Cardiac septum (tissue), 1 donor: ENCODE measurements at regions of chr5 and their contacts with region 1.

Region 1: GRCh38 chr5:10563945-10564837 is at the start of gene ANKRD33B:
- DNase-seq: peak; percentile 89
- total RNA-seq, gene ANKRD33B: 15.2 TPM

Region 2: DNA sequence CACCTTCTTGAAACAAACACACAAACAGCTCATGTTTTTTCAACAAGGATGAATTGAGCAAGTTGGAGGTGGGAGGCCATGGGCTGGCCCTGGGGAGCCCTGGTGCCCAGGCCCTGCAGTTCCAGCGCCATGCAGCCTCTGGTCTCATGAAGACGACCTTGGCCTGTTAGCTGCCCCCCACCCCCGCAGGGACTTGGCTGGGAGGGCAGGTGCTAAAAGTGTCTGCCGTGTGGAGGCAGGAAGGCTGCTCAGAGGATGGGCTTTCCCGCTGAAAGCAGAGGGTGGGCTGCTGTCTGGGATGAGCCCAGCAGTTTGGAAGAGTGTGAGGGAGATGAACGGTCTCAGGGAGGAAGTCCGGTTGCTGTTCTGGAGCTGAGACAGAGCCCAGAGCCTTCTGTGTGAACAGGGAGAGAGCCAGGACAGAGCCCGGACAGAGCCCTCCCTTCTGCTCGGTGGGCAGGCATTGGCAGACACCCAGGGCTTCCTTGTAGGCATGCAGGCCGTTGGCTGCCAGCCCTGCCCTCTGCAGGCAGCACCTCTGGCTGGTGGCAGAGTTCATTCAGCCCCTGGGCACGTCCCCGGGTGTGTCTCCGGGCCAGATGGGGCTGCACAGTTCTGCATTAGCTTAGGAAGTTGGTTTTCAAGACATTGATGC is 103.8 kb before region 1 on chr5:
- intact Hi-C with region 1: loop called (anchors 2 kb)
- DNase-seq: peak; percentile 90

Region 3: GRCh38 chr5:10601246-10602030 is 37.2 kb after region 1 on chr5:
- intact Hi-C with region 1: loop called (anchors 2 kb)
- DNase-seq: peak; percentile 90

Region 4: GRCh38 chr5:10627160-10627701 is 63.0 kb after region 1 on chr5:
- intact Hi-C with region 1: loop called (anchors 5 kb)
- DNase-seq: no peak